Left cardiac atrium (tissue), 4 donors: ENCODE measurements at regions of chr15 and their contacts with region 1.

Region 1: GRCh38 chr15:28885630-28886430 is at the start of gene APBA2:
- DNase-seq: no peak
- ATAC-seq: peak; percentile 29 to 31
- total RNA-seq, gene APBA2: 0.73 to 0.85 TPM

Region 2: GRCh38 chr15:29089731-29090616 is 204.1 kb after region 1 on chr15:
- intact Hi-C with region 1: loop called in 1 of 2 experiments (anchors 5 kb)
- DNase-seq: no peak
- ATAC-seq: peak in 1 of 2 donors; percentile 19

Region 3: DNA sequence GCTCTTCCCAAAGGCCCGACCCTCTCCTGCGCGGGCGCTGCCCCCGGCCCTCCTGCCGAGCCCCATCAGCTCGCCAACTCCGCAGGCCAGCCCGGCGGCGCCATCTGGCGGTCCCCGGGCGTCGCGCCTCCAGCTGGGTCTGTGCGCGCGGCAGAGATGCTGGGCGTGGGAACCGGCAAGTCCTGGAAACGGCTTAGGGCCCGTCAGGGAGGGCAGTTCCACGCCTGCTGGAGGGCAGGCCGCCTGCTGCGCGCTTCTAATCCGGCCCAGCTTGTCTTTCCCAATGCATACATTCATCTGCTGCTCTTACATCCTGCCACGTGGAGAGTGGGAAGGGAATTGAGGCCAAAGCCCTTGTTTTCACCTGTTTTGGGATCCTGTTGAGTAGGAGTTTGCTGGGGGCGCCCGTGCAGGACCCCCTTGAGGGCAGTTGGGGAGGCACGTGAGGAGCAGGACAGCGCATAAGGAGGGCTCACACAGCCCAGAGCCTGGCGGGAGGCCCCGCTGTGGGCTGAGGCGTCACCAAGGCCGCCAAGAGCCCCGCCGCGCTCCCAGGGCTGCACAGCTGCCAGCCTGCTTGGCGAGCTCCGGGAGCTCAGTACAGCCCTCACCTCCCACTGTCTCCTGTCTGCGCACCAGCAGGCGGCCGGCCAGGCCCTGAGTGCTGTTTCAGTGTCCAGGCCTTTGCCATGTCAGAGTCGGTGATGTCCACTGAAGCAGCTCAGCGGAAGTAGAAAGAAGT is 218.2 kb after region 1 on chr15:
- intact Hi-C with region 1: loop called in 1 of 2 experiments (anchors 10 kb)
- DNase-seq: peak; percentile 82
- ATAC-seq: peak; percentile 90 to 93

Region 4: GRCh38 chr15:29205186-29205585 is 319.4 kb after region 1 on chr15:
- intact Hi-C with region 1: no loop called
- DNase-seq: no peak
- ATAC-seq: no peak